ENCODE measurements at regions of chr5 and their contacts with region 1.

Region 1: GRCh38 chr5:135551593-135552447 is 16.1 kb upstream of the NEUROG1 start:
- DNase-seq: peak in 41 of 42 donors; percentile 39 to 92 (median 77)

Region 2: GRCh38 chr5:135106610-135107471 is 445.0 kb before region 1 on chr5:
- intact Hi-C with region 1: no loop called
- DNase-seq: peak in 1 of 42 donors; percentile 27

Region 3: GRCh38 chr5:135410348-135410747 is 141.5 kb before region 1 on chr5:
- intact Hi-C with region 1: no loop called
- DNase-seq: no peak

Region 4: DNA sequence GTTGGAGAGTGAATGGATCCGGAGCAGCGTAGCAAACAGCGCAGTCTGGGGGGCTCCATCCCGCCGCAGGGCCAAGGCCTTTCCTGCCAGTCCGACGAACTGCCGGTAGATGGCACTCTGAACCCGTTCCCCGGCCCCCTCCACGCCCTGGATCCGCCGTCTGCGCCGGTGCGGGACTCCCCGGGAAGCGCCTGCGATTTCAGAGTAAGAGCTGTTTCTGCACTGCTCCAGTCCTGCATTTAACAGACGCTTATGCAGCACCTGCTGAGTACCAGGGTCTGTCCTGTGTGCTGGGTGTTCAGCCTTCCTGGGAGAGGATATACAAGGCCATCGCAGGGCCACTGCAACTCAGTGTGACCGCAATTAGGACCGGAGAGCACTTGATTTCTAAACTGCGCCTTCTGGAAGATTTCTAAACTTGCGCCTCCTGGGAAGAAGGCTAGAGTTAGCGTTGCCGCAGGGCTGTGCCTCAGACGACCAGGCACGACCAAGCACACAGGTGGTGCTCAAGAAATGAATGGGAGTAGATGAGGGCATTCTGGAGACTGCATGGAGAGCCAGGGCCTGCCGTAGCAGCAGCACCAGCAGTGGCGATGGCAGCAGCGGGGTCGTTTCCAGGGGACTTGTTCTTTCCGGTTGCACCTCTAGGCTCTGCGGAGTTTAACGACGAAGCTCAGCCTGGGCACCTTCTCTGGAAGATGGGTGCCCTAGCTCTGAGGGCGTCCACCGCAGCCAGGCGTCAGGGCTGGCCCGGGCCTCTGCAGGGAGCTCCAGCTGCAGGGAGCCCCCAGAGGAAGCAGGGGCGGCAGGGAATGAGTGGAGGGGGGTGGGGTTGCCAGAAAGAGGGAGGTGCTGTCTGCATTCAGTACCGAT is 85.4 kb before region 1 on chr5:
- intact Hi-C with region 1: loop called (anchors 2 kb)
- DNase-seq: peak; percentile 60 to 94 (median 85)

Region 5: GRCh38 chr5:136222583-136223274 is 670.9 kb after region 1 on chr5:
- intact Hi-C with region 1: no loop called
- DNase-seq: no peak

Measured in head of caudate nucleus (tissue), 42 donors.